Adrenal gland (tissue), 19 donors: ENCODE measurements at regions of chrX and their contacts with region 1.

Region 1: DNA sequence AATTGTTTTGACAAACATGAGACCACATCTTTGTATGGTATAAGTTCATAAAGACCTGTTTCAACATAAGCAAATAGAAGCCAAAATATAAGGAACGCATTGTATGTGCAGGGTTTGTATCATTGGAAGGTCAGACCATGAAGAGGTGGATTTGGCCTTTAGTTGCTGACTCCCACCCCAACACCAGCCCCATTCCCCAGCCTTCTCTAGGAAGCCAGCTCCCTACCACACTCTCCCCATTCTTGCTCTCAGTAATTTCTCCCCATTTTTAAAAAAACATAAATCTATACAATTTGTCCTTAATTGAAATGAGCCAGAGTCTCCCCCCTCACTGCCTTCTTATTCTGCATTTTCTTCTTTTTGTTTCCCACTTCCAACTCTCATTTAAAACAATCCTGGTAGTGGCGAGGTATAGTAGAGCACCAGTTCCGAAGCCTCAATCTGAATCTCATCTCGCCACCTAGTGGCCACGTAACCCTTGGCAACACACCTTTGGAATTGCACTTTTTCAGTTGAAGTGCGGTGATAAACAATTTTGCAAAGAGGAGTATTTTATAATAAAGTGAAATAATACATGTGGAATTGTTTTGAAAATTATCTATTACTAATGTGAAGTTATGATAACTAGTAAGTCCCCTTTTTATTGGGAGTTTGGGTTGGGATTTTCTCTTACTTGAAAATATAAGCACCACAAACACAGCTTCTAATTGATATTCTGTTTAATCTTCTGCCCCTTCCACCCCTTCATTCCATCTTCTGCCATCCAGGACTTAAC is 126.6 kb downstream of the ASB9 start:
- DNase-seq: peak; percentile 30 to 62 (median 49)
- H3K4me3 ChIP-seq: no peak overlapping the region
- H3K27ac ChIP-seq: no peak overlapping the region
- H3K4me1 ChIP-seq: no peaks in the 10 kb centered on the region
- H3K27me3 ChIP-seq: peaks cover 13% of the 10 kb centered on the region
- CTCF ChIP-seq: peak; percentile 41 to 70 (median 54)
- POLR2A ChIP-seq: no peak

Region 2: GRCh38 chrX:14043209-14043608 is 1100.0 kb before region 1 on chrX:
- intact Hi-C with region 1: loop called in 1 of 2 experiments (anchors 10 kb)
- DNase-seq: no peak
- H3K4me3 ChIP-seq: no peak overlapping the region
- H3K27ac ChIP-seq: no peak overlapping the region
- H3K4me1 ChIP-seq: no peaks in the 10 kb centered on the region
- H3K27me3 ChIP-seq: peaks cover 39% of the 10 kb centered on the region
- CTCF ChIP-seq: no peak
- POLR2A ChIP-seq: no peak

Region 3: GRCh38 chrX:14095702-14096101 is 1047.5 kb before region 1 on chrX:
- intact Hi-C with region 1: loop called in 1 of 2 experiments (anchors 10 kb)
- DNase-seq: peak; percentile 15 to 69 (median 38)
- H3K4me3 ChIP-seq: no peak overlapping the region
- H3K27ac ChIP-seq: no peak overlapping the region
- H3K4me1 ChIP-seq: no peaks in the 10 kb centered on the region
- H3K27me3 ChIP-seq: peaks cover 21% of the 10 kb centered on the region
- CTCF ChIP-seq: peak; percentile 34 to 74 (median 53)
- POLR2A ChIP-seq: no peak